ENCODE measurements at regions of chr11 and their contacts with region 1.

Region 1: GRCh38 chr11:67468835-67469811 is at the start of gene TMEM134:
- DNase-seq: peak; percentile 92
- ATAC-seq: peak; percentile 65
- H3K4me3 ChIP-seq: peak within 1 kb of the TSS; percentile 85
- H3K27ac ChIP-seq: peak within 1 kb of the TSS; percentile 90
- H3K4me1 ChIP-seq: peaks cover 31% of the 10 kb centered on the region
- H3K27me3 ChIP-seq: no peaks in the 10 kb centered on the region
- CTCF ChIP-seq: peak; percentile 65
- total RNA-seq, gene TMEM134: 73.5 and 107 TPM in 2 replicates

Region 2: DNA sequence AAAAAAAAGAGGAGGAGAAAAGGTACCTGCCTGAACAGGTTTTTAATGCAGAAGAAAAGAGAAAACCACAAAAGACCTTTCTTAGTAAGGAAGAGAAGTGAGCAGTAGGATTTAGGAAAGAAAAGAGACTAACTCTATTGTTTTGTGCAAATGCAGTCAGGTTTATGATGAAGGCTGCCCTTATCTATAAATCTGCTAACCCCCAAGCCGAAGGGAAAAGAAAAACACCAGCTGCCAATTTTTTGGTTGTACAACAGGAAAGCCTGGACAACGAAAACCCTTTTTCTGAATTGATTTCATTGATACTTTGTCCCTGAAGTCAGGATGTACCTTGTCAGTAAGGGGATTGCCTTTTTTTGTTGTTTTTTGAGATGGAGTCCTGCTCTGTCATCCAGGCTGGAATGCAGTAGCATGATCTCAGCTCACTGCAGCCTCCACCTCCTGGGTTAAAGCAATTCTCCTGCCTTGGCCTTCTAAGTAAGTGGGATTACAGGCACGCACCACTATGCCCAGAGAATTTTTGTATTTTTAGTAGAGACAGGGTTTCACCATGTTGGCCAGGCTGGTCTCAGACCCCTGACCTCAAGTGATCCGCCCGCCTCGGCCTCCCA is 136.9 kb before region 1 on chr11:
- CTCF ChIA-PET with region 1: no interaction called
- POLR2A ChIA-PET with region 1: no interaction called
- intact Hi-C with region 1: no loop called
- DNase-seq: no peak
- ATAC-seq: no peak
- H3K4me3 ChIP-seq: no peak overlapping the region
- H3K27ac ChIP-seq: no peak overlapping the region
- H3K4me1 ChIP-seq: no peaks in the 10 kb centered on the region
- H3K27me3 ChIP-seq: no peaks in the 10 kb centered on the region
- CTCF ChIP-seq: no peak

Region 3: GRCh38 chr11:67442504-67443405 is 26.4 kb before region 1 on chr11:
- CTCF ChIA-PET with region 1: no interaction called
- POLR2A ChIA-PET with region 1: no interaction called
- intact Hi-C with region 1: loop called (anchors 1 kb)
- DNase-seq: peak; percentile 29
- ATAC-seq: peak; percentile 23
- H3K4me3 ChIP-seq: peak overlapping the region; percentile 82
- H3K27ac ChIP-seq: peak overlapping the region; percentile 31
- H3K4me1 ChIP-seq: 0 out of 2 replicates have a peak, but pooled peaks cover 6% of the 10 kb centered on the region
- H3K27me3 ChIP-seq: no peaks in the 10 kb centered on the region
- CTCF ChIP-seq: no peak